HEK293 (cell line): ENCODE measurements at regions of chr22 and their contacts with region 1.

Region 1: DNA sequence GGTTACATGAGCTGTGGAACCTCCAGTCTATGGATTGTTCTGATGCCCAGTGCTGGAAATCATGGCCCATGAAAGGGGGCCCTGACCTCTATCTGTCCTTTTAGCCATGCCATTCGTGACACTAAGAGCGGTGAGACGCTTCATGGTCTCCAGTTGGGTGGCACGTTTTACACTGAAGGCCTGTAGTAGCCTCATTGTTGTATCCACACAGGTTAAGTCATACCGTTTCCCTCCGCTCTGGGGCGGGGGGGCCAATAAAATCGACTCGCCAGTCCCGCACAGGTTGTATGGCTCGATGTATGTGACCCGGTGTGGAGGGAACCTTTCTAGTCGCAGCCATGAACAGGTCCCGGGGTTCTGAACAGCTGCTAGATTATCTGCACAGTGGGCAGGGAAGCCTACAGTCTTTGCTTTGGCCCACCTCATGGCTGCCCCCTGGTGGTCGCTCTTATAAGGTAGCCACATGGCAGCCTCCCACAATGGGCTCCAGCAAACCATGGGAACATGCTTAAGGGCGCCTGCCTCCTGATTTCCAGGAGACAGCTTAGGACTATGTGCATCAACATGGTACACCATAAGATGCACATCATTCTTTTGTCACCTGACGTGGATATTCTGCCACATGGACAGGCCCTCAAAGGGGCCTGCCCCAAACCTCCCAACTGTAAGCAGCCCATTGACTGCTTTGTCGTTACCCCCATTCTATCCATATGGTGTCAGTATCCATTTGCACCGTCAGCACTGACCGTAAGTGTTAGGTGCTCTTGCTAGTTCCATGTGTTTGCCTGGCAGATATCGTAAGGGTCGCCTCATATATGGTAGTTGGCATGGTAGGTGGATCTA is 19.7 kb upstream of the APOL3 start:
- H3K4me3 ChIP-seq: no peak overlapping the region
- H3K27ac ChIP-seq: no peak overlapping the region
- H3K4me1 ChIP-seq: no peaks in the 10 kb centered on the region
- CTCF ChIP-seq: no peak

Region 2: DNA sequence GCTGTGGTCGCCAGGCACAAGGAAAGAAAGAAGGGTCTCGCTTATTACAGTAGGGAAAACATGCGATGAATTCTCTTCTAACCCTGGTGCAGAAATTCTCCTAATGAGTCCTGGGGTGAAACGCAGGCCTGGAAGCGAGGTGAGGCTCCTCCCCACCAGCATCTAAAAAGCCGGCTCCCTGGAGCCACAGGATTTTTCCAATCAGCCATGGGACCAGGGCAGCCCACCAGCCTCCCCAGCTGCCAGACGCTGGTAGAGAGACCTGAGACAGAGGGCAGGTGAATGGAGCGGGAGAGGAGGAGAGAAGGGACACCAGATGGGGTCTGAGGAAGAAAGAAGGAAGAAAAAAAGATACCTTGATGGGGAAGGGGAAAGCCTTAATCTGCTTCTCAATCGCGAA is 48.4 kb before region 1 on chr22:
- CTCF ChIA-PET with region 1: no interaction called
- POLR2A ChIA-PET with region 1: no interaction called
- H3K4me3 ChIP-seq: no peak overlapping the region
- H3K27ac ChIP-seq: no peak overlapping the region
- H3K4me1 ChIP-seq: no peaks in the 10 kb centered on the region
- CTCF ChIP-seq: no peak

Region 3: DNA sequence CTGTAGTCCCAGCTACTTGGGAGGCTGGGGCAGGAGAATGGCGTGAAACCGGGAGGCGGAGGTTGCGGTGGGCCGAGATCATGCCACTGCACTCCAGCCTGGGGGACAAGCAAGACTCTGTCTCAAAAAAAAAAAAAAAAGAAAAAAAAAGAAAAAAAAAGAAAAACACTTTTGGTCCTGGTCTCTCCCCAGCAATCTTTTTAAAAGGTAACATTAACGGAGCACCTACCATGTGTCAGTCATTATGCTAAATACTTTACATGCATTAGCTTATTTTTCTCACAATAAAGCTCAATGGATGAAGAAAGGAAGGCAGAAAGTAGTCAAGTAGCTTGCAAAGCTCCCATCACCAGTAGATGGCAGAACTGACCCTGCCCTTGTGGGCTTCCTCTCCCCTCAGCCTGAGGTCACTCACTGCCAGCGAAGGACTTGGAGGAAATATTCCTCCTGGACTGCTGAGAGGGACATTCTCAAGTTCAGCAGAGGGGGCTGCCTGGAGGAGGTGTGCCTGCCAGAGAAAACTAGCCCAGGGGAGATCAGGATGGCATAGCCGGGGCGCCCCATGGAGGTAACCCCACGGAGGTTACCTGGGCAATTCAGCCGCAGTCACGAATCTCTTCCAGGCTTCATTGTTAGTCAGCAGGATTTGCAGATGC is 35.2 kb before region 1 on chr22:
- CTCF ChIA-PET with region 1: interaction called, 63 read pairs
- POLR2A ChIA-PET with region 1: interaction called, 3 read pairs
- H3K4me3 ChIP-seq: no peak overlapping the region
- H3K27ac ChIP-seq: no peak overlapping the region
- H3K4me1 ChIP-seq: no peaks in the 10 kb centered on the region
- CTCF ChIP-seq: peak; percentile 63

Region 4: GRCh38 chr22:36151006-36151595 is 29.2 kb before region 1 on chr22:
- CTCF ChIA-PET with region 1: interaction called, 63 read pairs
- POLR2A ChIA-PET with region 1: no interaction called
- H3K4me3 ChIP-seq: no peak overlapping the region
- H3K27ac ChIP-seq: no peak overlapping the region
- H3K4me1 ChIP-seq: no peaks in the 10 kb centered on the region
- CTCF ChIP-seq: no peak

Region 5: DNA sequence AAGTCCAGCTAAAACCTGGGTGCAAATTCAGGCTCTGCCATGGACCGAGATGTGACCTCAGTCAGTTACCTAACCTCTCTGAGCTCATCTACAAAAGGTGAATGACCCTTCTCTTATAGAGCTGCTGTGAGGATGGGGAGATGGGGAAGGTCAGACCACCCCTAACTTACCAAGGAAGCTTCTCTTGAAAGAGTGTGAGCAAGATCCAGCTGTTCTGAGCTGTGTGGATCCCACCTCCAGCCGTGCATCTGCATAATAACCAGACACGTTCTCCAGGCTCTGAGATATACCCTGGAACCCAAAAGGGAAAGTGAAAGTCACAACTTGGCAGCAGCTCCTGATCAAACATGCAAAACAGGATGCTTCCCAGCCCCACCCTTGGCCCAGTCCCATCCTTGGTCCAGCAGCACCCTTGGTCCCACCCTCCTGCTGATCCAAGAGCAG is 19.7 kb before region 1 on chr22 and contains the start of gene APOL3:
- CTCF ChIA-PET with region 1: interaction called, 21 read pairs
- POLR2A ChIA-PET with region 1: no interaction called
- H3K4me3 ChIP-seq: no peak within 1 kb of the TSS
- H3K27ac ChIP-seq: no peak within 1 kb of the TSS
- H3K4me1 ChIP-seq: no peaks in the 10 kb centered on the region
- CTCF ChIP-seq: no peak

Region 6: GRCh38 chr22:36194971-36195370 is 14.7 kb after region 1 on chr22:
- CTCF ChIA-PET with region 1: interaction called, 60 read pairs
- POLR2A ChIA-PET with region 1: no interaction called
- H3K4me3 ChIP-seq: no peak overlapping the region
- H3K27ac ChIP-seq: no peak overlapping the region
- H3K4me1 ChIP-seq: no peaks in the 10 kb centered on the region
- CTCF ChIP-seq: peak; percentile 73

Region 7: GRCh38 chr22:36486619-36487384 is 306.5 kb after region 1 on chr22:
- CTCF ChIA-PET with region 1: interaction called, 10 read pairs
- POLR2A ChIA-PET with region 1: no interaction called
- H3K4me3 ChIP-seq: no peak overlapping the region
- H3K27ac ChIP-seq: no peak overlapping the region
- H3K4me1 ChIP-seq: no peaks in the 10 kb centered on the region; the same call in 1 of the 2 replicates
- CTCF ChIP-seq: peak; percentile 79